Astrocyte of the cerebellum (primary cell): ENCODE measurements at regions of chr21 and their contacts with region 1.

Region 1: DNA sequence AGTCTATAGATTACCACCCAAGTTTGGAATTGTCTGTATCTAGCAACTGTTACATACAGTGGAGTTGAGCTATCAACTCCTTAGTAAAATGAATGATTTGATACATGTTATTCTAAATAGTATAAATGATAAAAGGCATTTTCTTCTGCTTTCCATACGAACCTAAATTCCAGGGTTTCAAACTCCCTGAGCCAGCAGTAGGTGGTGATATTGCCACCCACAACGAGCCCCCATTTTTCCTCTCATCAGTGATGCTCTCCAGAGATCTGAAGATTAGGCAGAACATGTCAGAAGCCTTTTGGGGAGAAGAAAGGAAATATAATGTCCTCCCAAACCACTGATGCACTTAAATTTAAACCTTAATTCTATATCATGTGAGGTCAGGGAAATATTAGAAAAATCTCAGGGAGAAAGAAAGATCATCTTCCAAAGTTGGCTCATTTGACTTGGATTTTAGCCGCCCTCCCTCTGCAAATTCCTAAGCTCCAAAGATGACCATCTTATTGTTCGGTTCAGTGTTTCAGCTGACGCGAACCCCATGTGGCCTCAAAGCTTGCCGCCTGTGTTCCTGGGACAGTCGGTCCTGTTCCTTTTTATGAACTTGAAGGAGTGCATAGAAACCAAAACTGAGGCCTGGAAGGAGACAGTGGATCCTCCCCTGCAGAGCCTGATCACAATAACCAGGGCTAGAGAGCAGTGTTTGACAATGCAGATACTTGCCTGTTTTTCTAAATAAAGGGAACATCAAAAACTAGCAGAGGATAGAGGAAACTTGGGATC is 2.3 kb downstream of the EVA1C start:
- DNase-seq: no peak
- H3K4me3 ChIP-seq: no peak overlapping the region
- CTCF ChIP-seq: peak; percentile 59

Region 2: DNA sequence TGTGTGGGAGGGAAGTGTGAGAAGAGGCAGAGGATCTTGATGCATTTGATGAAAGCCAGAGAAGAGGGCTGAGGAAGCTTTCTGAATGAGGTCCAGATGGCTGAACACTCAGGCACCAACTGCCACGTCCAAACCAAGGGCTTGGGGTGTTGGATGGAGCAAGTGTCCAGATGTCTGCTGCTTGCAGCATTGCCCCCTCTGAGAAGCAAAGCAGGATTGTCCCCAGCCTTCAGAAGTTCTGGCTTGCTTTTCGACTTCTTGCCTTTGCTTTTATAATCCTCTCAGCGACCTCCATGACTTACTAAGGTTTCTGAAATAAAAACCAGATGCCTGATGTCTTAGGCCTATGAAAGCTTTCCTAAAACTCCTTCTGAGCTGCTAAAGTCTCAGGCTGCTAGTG is 359.5 kb before region 1 on chr21:
- in situ Hi-C with region 1: no loop called
- DNase-seq: no peak
- H3K4me3 ChIP-seq: no peak overlapping the region
- CTCF ChIP-seq: no peak

Region 3: DNA sequence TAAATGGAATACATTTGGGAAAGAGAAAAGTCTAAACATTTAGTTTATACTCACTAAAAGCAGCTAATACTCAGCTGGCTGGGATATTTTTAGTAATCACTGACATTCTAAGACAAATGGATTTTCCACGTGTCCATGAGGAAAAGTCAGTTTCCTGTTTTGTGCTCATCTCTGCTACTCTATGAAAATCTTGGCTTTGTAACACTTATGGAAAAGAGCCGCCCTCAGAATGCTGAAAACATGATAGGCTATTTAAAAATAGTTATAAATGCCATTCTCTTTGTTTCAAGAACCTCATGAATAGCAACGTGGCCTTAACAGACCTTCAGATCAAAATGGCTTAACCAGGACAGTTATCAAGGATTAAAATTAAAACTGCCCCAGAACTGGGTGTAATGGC is 86.2 kb before region 1 on chr21:
- in situ Hi-C with region 1: no loop called
- DNase-seq: no peak
- H3K4me3 ChIP-seq: no peak overlapping the region
- CTCF ChIP-seq: no peak

Region 4: GRCh38 chr21:32520875-32521735 is 106.3 kb after region 1 on chr21:
- in situ Hi-C with region 1: loop called (anchors 5 kb)
- DNase-seq: peak; percentile 94
- H3K4me3 ChIP-seq: no peak overlapping the region
- CTCF ChIP-seq: no peak